Cardiac septum (tissue), 1 donor: ENCODE measurements at regions of chr19 and their contacts with region 1.

Region 1: DNA sequence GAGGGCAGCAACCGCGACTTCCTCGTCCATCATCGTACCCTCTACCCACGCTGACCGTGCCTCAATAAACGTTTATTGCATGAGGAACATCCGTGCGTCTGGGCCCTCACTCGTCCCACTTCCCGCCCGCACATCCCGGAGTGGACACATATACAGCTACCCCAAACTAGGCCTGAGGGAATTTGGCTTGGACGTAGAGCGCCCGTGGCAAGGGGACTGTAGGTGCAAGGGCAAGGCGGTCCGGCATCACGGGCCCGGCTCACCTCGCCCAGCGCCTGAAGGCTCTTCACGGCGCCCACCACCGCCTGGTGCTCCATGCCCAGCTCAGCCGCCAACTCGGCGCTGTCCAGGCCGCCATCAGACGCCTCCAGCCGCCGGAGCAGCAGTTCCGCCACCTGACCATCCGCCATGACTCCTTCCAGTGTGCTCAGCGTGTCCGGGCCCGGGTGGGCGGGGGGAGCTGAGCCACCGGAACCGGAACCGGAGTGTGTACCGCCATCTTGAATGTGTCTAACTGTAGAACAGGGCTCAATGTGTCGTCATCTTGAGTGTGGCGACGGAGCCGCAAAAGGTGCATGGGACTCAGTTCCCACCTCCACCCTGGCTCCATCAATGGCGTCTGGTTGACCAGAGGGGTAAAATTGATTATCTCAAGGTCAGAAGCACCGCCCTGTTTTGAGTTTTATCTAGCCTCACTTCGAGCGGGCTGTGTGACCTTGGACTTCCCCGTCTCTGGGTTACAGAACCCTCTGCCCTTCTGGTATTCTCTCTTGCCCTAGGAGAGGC is at the start of gene FARSA:
- DNase-seq: peak; percentile 98
- total RNA-seq, gene FARSA: 36.3 TPM

Region 2: DNA sequence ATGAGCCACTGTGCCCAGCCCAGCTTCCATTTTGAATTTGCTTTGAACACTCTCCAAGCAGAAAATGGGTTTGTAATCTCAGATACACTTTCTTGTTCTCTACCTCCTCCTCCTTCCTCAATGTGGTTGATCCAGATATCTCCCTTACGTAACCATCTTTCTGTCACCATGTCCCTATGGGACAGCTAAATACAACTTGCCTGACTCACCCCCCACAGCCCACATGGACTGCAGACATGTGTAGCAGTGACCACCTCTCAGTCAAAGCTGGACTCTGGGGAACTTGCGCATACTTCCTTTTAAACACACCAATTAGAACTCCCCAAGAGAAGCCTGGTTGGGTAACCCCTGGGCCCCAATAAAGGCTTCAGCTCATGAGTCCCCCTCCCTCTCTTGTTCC is 521.6 kb before region 1 on chr19:
- intact Hi-C with region 1: no loop called
- DNase-seq: no peak

Region 3: DNA sequence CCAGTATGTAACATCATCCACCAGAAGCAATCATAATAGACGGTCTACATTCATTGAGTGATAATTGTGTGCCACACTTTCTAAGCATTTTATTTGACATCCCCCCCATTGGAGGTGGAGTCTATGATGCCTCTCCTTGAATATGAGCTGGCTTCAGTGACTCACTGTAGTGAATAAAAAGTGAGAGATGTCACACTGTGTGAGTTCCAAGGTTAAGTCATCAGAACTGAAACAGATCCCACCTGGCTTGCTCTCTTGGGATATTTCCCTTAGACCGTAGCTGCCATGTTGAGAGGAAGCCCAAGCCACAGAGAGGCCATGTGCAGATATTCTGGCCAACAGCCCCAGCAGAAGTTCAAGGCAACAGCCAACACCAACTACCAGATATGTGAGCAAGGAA is 111.7 kb before region 1 on chr19:
- intact Hi-C with region 1: no loop called
- DNase-seq: no peak

Region 4: GRCh38 chr19:12890787-12891552 is 42.5 kb before region 1 on chr19 and contains the start of gene GCDH:
- intact Hi-C with region 1: loop called (anchors 5 kb)
- DNase-seq: peak; percentile 98
- total RNA-seq, gene GCDH: 33.2 TPM